Activated naive CD4-positive, alpha-beta T cell treated with anti-CD3 and anti-CD28 coated beads for 36 hours (primary cell): ENCODE measurements at regions of chr6 and their contacts with region 1.

Region 1: GRCh38 chr6:20105838-20106237 is 106.4 kb downstream of the MBOAT1 start:
- DNase-seq: no peak
- H3K4me3 Mint-ChIP-seq: no peak overlapping the region
- H3K27ac Mint-ChIP-seq: no peak overlapping the region
- H3K4me1 Mint-ChIP-seq: no peaks in the 10 kb centered on the region
- H3K27me3 Mint-ChIP-seq: no peaks in the 10 kb centered on the region

Region 2: DNA sequence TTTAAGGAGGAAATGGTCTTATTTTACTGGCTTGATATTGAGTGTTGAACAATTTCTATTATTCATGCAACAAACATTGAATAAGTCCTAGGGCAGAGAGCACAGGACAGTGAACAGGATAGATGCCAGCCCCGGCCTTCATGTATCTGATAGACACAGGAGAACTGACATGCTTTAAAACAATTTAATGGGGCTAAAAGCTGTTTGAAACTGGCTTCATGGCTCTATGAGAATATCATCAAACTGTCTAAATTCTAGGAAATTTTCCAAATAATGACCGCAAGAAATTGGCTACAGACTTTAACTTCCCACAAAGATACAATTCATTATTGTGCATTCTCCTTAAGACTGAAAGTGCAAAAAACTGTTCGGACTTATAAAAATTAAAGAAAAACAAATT is 199.7 kb before region 1 on chr6:
- CTCF ChIA-PET with region 1: no interaction called
- intact Hi-C with region 1: no loop called
- DNase-seq: no peak
- H3K4me3 Mint-ChIP-seq: no peak overlapping the region
- H3K27ac Mint-ChIP-seq: no peak overlapping the region
- H3K4me1 Mint-ChIP-seq: no peaks in the 10 kb centered on the region
- H3K27me3 Mint-ChIP-seq: no peaks in the 10 kb centered on the region

Region 3: GRCh38 chr6:20126789-20127653 is 21.2 kb after region 1 on chr6:
- CTCF ChIA-PET with region 1: interaction called, 10 read pairs
- intact Hi-C with region 1: no loop called
- DNase-seq: peak; percentile 73
- H3K4me3 Mint-ChIP-seq: no peak overlapping the region
- H3K27ac Mint-ChIP-seq: no peak overlapping the region
- H3K4me1 Mint-ChIP-seq: peaks cover 4% of the 10 kb centered on the region
- H3K27me3 Mint-ChIP-seq: no peaks in the 10 kb centered on the region